ENCODE measurements at regions of chr17 and their contacts with region 1.

Region 1: DNA sequence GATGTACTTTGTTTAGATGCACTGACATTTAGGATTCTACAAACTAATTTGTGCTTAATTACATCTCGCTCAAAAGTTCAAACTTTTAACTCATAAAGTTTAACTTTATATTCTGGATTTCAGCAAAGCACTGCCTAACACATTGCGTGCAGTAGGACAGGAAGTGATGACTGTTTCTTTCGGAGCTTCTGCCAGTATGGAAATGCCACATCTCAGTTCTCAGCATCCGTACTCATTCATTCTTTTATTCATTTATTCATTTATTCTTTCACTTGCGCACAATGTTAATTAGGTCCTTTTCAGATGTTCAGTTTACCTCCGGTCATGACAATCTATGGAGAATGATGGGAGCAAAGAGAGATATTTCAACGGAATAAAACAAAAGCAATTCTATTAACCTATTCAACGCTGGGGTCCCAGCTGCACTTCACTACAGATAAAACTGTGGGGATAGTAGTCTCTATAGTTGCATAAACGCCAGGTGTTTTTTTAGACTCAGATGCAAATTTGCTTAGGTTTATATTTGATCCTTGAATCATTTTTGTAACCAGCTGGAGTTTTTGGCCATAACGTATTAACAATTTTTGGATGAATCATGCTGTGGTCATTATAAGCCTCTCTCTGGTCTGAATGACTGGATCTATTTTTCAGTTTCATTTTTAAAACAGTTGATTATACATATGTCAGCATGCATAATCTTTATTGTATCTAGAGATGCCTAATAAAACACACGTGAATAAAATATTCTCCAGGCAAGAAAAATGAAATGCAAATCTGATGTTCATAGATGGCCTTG is 143.9 kb downstream of the KCNJ2 start:
- DNase-seq: no peak
- ATAC-seq: no peak

Region 2: GRCh38 chr17:70390049-70390448 is 76.8 kb after region 1 on chr17:
- intact Hi-C with region 1: no loop called
- DNase-seq: no peak
- ATAC-seq: no peak

Region 3: GRCh38 chr17:70478902-70479301 is 165.6 kb after region 1 on chr17:
- intact Hi-C with region 1: loop called (anchors 10 kb)
- DNase-seq: no peak
- ATAC-seq: peak; percentile 85

Measured in Right ventricle myocardium inferior (tissue), 1 donor.